Heart right ventricle (tissue), 16 donors: ENCODE measurements at regions of chr14 and their contacts with region 1.

Region 1: DNA sequence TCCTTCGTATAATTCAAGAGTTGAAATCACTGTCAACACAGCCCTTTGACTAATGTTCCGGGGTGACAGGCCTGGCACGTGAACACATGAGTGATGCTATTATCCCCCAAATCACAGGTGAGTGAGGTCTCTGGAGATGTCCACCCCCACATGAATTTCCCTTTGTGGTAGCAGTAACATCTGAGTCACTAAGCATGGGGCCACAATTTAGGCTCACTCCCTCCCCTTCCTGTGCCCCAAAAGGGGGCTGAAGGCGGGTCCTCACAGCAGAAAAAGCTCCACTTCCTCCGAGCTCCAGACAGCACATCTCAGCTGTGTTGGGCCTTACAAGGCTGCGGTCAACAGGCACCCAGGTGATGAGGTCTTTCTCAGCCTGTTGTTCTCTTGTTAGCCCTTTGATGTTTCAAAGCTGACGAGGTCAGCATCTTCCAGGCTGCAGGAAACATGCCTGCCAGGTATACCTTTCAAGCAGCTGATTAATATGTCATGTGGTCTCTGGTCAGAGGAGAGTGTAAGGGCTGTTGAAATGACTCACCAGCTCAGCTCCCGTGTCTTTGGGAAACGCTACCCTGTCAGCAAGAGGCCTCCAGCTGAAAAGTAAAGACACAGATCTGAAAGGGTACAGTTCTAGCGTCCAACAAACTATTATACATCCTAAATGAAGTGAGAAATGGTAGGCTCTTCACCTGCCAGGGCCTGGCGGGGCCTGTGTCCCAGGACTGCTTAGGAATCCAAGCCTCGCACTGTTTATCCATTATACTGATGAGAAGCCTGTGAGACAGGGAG is 107.3 kb downstream of the ZFP36L1 start:
- DNase-seq: no peak
- ATAC-seq: no peak
- H3K4me3 ChIP-seq: no peak overlapping the region
- H3K27ac ChIP-seq: peak overlapping the region in 5 of 10 donors; percentile 25 to 96 (median 85)
- H3K4me1 ChIP-seq: peaks cover 23 to 69% (median 47%) of the 10 kb centered on the region in 9 donors
- H3K27me3 ChIP-seq: no peaks in the 10 kb centered on the region
- CTCF ChIP-seq: no peak

Region 2: DNA sequence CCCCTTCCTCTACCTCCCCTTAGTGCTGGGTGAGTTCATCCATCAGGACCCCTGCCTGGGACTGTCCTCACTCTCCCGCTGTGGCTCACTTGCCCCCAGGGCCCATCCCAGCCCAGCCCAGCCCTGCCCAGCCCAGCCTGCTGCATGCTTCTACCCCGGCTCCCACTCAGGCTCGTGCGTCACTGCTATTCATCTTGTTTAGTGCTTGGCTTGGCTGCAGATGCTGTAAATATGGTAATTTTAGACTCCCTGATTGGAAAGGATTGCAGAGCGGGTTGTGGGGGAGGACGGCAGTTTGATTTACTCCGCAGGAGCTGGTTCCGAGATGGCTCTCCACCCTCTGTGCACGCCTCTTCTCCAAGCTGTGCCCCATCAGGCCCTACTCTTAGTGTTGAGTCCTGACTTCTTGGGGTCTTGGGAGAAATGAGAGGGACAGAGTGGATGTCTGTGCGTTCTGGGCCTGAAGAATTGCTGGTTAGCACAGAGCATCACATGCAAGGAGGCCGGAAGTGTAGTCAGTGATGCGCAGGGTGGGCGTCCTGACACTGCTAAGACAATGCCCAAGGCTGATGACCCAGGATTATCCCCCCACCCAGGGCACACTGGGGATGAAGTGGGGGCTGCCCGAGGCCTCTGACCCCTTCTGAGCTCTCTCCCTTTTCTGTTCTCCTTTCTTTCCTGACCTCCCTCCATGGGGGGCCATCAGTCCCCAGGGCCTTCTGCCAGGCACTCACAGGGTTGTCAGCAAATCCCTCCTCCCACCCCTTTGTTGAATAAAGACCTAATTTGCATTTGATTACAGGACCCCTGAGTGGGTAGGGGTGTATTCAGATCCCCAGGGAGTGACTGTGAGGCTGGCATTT is 137.2 kb before region 1 on chr14:
- intact Hi-C with region 1: no loop called
- DNase-seq: peak; percentile 87 to 94
- ATAC-seq: peak; percentile 87 to 95 (median 93)
- H3K4me3 ChIP-seq: no peak overlapping the region
- H3K27ac ChIP-seq: peak overlapping the region; percentile 91 to 97 (median 94)
- H3K4me1 ChIP-seq: peaks cover 28 to 85% (median 69%) of the 10 kb centered on the region in 9 donors
- H3K27me3 ChIP-seq: no peaks in the 10 kb centered on the region
- CTCF ChIP-seq: no peak

Region 3: GRCh38 chr14:68727315-68728047 is 41.9 kb after region 1 on chr14:
- intact Hi-C with region 1: loop called in 2 of 10 experiments (anchors 2 to 5 kb)
- DNase-seq: peak in 1 of 2 donors; percentile 52
- ATAC-seq: peak; percentile 49 to 82 (median 76)
- H3K4me3 ChIP-seq: no peak overlapping the region
- H3K27ac ChIP-seq: peak overlapping the region in 7 of 10 donors; percentile 7 to 77 (median 23)
- H3K4me1 ChIP-seq: peaks cover 16 to 69% (median 50%) of the 10 kb centered on the region in 9 donors
- H3K27me3 ChIP-seq: no peaks in the 10 kb centered on the region
- CTCF ChIP-seq: no peak